Esophagus squamous epithelium (tissue), 5 donors: ENCODE measurements at regions of chr14 and their contacts with region 1.

Region 1: DNA sequence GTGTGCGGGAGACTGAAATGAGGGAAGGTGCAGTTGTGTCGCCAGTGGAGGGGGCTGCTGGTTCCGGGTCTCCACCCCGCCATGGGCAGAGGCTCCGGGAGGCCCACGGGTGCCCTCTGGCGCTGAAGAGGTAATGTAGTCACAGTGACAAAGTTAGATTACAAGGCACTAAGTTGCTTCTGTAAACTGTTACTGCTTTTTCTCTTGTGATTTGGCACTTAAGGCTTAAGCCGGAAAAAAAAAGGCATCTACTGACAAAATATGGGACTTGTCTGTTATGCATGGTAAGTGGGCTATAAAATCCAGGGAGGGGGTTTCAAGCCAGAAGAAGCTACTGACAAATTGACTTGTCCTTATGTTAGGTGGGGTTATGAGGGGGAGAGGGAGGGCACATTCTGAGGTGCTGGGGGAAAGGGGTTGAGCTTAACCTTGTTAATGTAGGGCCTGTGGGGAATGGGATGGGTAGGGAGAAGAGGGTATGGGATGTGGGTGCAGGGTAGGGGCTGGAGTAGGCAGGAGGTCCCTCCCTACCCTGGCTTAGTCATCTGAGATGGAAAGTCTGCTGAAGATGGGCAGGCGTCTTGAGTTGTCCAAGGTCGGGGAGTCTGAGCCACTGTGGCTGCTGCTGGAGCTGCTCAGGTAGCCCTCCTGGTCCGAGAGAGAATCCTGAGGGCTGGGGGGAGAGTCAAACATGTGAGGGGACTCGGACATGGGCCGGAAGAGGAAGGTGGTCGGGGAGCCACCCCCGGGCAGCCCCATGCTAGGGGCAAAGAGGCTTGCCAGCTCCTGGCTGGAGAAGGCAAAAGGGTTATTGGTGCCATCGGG is 3.7 kb downstream of the ZFP36L1 start:
- DNase-seq: peak; percentile 23
- H3K4me3 ChIP-seq: peak overlapping the region; percentile 69 to 95 (median 86)
- H3K27ac ChIP-seq: peak overlapping the region; percentile 95 to 100 (median 99)
- H3K4me1 ChIP-seq: peaks cover 22 to 65% (median 29%) of the 10 kb centered on the region in 3 donors
- H3K27me3 ChIP-seq: no peaks in the 10 kb centered on the region
- CTCF ChIP-seq: peak; percentile 39 to 73 (median 58)
- POLR2A ChIP-seq: no peak

Region 2: DNA sequence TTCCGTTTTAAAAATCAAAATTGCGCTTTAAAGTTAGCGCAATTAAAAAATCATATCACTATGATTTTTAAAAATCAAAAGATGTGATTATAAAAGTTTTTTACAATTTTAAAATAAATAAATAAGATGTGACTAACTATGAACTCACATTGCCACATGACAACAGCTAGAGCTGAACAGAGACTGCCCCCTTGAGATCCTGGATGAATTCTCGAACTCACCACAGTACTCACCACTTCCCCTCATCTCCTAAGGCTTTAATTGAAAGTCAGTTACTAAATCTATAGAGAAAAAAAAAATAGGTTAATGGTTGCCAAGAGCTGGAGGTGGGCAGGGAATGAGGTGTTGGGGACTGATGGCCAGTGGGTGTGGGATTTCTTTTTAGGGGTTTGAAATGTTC is 380.5 kb before region 1 on chr14:
- intact Hi-C with region 1: no loop called
- DNase-seq: no peak
- H3K4me3 ChIP-seq: no peak overlapping the region
- H3K27ac ChIP-seq: no peak overlapping the region
- H3K4me1 ChIP-seq: peaks cover 8 to 34% (median 17%) of the 10 kb centered on the region in 3 donors
- H3K27me3 ChIP-seq: no peaks in the 10 kb centered on the region
- CTCF ChIP-seq: peak in 1 of 6 experiments; percentile 6
- POLR2A ChIP-seq: no peak

Region 3: DNA sequence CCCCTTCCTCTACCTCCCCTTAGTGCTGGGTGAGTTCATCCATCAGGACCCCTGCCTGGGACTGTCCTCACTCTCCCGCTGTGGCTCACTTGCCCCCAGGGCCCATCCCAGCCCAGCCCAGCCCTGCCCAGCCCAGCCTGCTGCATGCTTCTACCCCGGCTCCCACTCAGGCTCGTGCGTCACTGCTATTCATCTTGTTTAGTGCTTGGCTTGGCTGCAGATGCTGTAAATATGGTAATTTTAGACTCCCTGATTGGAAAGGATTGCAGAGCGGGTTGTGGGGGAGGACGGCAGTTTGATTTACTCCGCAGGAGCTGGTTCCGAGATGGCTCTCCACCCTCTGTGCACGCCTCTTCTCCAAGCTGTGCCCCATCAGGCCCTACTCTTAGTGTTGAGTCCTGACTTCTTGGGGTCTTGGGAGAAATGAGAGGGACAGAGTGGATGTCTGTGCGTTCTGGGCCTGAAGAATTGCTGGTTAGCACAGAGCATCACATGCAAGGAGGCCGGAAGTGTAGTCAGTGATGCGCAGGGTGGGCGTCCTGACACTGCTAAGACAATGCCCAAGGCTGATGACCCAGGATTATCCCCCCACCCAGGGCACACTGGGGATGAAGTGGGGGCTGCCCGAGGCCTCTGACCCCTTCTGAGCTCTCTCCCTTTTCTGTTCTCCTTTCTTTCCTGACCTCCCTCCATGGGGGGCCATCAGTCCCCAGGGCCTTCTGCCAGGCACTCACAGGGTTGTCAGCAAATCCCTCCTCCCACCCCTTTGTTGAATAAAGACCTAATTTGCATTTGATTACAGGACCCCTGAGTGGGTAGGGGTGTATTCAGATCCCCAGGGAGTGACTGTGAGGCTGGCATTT is 240.8 kb before region 1 on chr14:
- intact Hi-C with region 1: loop called (anchors 10 kb)
- DNase-seq: no peak
- H3K4me3 ChIP-seq: peak overlapping the region in 1 of 4 donors; percentile 33
- H3K27ac ChIP-seq: peak overlapping the region; percentile 94 to 99 (median 96)
- H3K4me1 ChIP-seq: peaks cover 72 to 100% (median 73%) of the 10 kb centered on the region in 3 donors
- H3K27me3 ChIP-seq: no peaks in the 10 kb centered on the region
- CTCF ChIP-seq: no peak
- POLR2A ChIP-seq: peak in 2 of 4 donors; percentile 24 to 50